Colonic mucosa (tissue), 4 donors: ENCODE measurements at regions of chr10 and their contacts with region 1.

Region 1: DNA sequence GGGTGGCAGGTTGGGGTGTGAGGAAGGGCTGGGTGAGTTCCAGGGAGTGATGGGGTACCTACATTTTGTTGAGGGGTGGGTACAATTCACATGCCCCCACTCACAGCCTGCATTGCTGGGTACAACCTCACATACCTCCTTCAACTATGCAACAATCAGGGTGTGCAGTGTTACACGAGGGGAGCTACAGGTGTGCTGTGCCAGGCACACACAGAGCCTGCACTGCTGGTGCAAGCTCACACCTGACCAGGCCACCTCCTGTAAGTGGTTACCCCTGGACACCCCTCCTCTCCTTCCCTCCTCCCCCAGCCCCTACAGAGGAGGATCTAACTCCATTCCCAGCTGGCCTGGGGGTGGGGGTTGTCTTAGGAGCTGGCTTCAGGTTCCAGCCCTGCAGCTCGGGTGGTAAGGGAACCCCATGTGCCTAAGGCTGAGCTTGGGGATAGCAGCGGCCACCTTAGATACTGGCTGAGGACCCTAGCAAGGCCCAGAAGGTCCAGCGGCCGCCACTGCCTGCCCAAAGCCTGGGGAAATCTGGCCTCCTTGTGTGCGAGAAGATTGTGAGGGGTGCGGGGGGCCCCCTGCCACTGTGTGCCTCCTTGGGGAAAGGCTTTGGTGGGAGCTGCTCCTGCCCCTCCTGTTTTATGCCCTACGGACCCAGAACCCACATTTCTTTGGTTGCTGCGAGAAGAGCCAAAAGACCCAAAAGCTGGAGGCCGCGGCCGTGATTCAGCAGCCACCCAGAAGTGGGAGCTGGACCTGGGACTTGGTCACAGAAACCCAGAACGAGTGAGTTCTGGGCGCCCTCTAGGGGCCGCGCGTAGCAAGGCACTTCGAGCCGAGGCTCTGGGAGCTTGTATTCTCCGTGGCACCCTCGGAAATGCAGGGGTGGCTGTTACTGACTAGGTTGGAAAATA is 10.8 kb downstream of the TLX1 start:
- DNase-seq: peak; percentile 87
- H3K4me3 ChIP-seq: no peak overlapping the region
- H3K27ac ChIP-seq: no peak overlapping the region
- H3K4me1 ChIP-seq: no peaks in the 10 kb centered on the region
- H3K27me3 ChIP-seq: peaks cover 95% of the 10 kb centered on the region
- CTCF ChIP-seq: peak; percentile 96

Region 2: GRCh38 chr10:100775386-100775785 is 366.5 kb before region 1 on chr10:
- intact Hi-C with region 1: no loop called
- DNase-seq: no peak
- H3K4me3 ChIP-seq: no peak overlapping the region
- H3K27ac ChIP-seq: no peak overlapping the region
- H3K4me1 ChIP-seq: no peaks in the 10 kb centered on the region
- H3K27me3 ChIP-seq: no peaks in the 10 kb centered on the region
- CTCF ChIP-seq: no peak

Region 3: GRCh38 chr10:101050208-101051069 is 91.4 kb before region 1 on chr10:
- intact Hi-C with region 1: loop called (anchors 10 kb)
- DNase-seq: peak; percentile 81
- H3K4me3 ChIP-seq: peak overlapping the region; percentile 12
- H3K27ac ChIP-seq: no peak overlapping the region
- H3K4me1 ChIP-seq: no peaks in the 10 kb centered on the region
- H3K27me3 ChIP-seq: peaks cover 26% of the 10 kb centered on the region
- CTCF ChIP-seq: peak; percentile 84

Region 4: GRCh38 chr10:101095542-101096213 is 46.2 kb before region 1 on chr10:
- intact Hi-C with region 1: loop called (anchors 2 kb)
- DNase-seq: peak; percentile 92
- H3K4me3 ChIP-seq: no peak overlapping the region
- H3K27ac ChIP-seq: no peak overlapping the region
- H3K4me1 ChIP-seq: no peaks in the 10 kb centered on the region
- H3K27me3 ChIP-seq: no peaks in the 10 kb centered on the region
- CTCF ChIP-seq: peak; percentile 74

Region 5: GRCh38 chr10:101782811-101783735 is 641.2 kb after region 1 on chr10 and contains the start of gene NPM3:
- intact Hi-C with region 1: no loop called
- DNase-seq: peak; percentile 91
- H3K4me3 ChIP-seq: peak within 1 kb of the TSS; percentile 54
- H3K27ac ChIP-seq: peak within 1 kb of the TSS; percentile 8
- H3K4me1 ChIP-seq: peaks cover 20% of the 10 kb centered on the region
- H3K27me3 ChIP-seq: no peaks in the 10 kb centered on the region
- CTCF ChIP-seq: no peak
- total RNA-seq, gene NPM3: 14.6 to 73.6 TPM